ENCODE measurements at regions of chr22 and their contacts with region 1.

Region 1: DNA sequence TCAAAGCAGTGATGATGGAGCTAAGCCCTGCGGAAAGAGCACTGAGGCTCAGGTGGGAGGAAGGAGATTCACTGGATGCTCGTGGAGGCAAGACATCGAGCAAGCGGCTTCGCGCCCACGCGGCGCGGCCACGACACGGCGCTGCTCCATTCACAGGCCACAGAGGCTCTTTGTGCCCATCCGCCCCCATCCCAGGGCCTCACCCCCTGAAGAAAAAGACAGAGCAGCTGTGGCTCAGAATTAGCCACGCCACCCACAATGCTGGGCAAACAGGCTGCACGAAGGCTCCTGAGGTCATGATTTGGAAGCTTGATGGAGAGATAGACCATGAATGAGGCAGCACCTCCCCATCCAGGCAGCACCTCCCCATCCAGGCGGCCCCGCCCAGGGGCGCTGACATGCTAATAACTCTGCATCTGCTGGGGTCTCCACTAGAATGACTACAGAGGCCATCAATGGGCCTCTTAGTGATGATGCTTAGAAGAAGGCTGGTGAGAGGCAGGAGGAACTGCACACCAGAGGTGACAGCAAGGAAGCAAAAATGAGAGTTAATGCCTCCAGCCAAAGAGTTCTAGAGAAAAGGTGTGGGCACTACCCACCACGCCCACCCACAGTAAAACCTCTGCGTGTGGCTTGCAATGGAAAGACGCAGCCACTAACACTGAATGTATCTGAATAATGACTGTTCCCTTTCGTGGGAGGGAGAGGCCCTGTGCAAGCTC is 43.5 kb downstream of the MYH9 start:
- DNase-seq: no peak
- H3K4me3 ChIP-seq: no peak overlapping the region
- H3K27ac ChIP-seq: no peak overlapping the region
- H3K4me1 ChIP-seq: no peaks in the 10 kb centered on the region
- H3K27me3 ChIP-seq: no peaks in the 10 kb centered on the region
- CTCF ChIP-seq: no peak

Region 2: GRCh38 chr22:36359181-36359996 is 15.1 kb after region 1 on chr22:
- CTCF ChIA-PET with region 1: interaction called, 3 read pairs
- POLR2A ChIA-PET with region 1: interaction called, 29 read pairs
- intact Hi-C with region 1: no loop called
- DNase-seq: no peak
- H3K4me3 ChIP-seq: no peak overlapping the region
- H3K27ac ChIP-seq: peak overlapping the region; percentile 25
- H3K4me1 ChIP-seq: peaks cover 75% of the 10 kb centered on the region
- H3K27me3 ChIP-seq: no peaks in the 10 kb centered on the region
- CTCF ChIP-seq: no peak